WTC11 (cell line): ENCODE measurements at regions of chr16 and their contacts with region 1.

Region 1: GRCh38 chr16:1331712-1332617 is 1.5 kb upstream of the BAIAP3 start:
- DNase-seq: peak; percentile 93
- ATAC-seq: peak; percentile 57
- H3K4me3 Mint-ChIP-seq: peak overlapping the region; percentile 76
- H3K27ac Mint-ChIP-seq: peak overlapping the region; percentile 72; the same call in 1 of the 2 replicates
- H3K4me1 Mint-ChIP-seq: peaks cover 14% of the 10 kb centered on the region
- H3K27me3 Mint-ChIP-seq: peaks cover 35% of the 10 kb centered on the region
- CTCF ChIP-seq: no peak

Region 2: DNA sequence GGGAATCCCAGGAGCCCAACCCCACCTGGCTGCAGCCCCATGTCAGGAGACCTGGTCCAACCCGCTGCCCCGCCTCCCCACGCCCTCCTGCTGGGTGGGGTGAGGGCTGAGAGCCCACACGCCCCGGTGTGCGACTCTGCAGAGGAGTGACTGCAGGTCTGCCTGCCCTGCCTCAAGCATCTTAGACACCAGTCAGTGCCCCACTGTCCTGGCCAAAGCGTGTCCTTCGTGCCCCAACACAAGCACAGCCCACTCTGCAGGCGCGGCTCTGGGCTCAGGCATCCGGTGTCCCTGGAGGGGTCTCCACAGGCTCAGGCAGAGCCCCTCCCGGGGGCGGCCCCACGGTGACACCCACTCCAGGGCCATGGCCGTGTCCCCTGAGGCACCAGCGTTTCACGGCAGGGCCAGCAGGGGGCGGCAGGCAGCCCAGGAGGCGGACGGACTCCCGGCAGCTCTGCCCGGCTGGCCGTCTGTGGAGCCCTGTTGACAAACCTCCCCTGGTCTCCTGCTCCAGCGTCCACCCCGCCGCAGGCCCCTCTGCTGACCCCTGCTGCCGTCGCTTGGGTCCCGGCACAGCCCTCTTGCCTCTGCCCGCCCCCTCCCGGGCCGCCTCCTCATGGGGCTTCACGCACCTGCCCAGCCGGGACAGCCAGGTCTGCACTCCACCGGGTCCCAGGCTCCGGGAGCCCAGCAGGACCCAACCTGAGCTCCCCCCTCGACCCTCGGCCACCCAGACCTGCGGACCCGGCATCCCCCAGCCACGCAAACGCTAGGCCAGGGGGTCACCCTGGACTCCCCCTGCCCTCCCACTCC is 31.1 kb before region 1 on chr16:
- CTCF ChIA-PET with region 1: interaction called, 15 read pairs
- POLR2A ChIA-PET with region 1: interaction called, 6 read pairs
- DNase-seq: peak; percentile 83
- ATAC-seq: peak; percentile 70
- H3K4me3 Mint-ChIP-seq: no peak overlapping the region
- H3K27ac Mint-ChIP-seq: no peak overlapping the region
- H3K4me1 Mint-ChIP-seq: peaks cover 20% of the 10 kb centered on the region
- H3K27me3 Mint-ChIP-seq: peaks cover 11% of the 10 kb centered on the region
- CTCF ChIP-seq: peak; percentile 89

Region 3: DNA sequence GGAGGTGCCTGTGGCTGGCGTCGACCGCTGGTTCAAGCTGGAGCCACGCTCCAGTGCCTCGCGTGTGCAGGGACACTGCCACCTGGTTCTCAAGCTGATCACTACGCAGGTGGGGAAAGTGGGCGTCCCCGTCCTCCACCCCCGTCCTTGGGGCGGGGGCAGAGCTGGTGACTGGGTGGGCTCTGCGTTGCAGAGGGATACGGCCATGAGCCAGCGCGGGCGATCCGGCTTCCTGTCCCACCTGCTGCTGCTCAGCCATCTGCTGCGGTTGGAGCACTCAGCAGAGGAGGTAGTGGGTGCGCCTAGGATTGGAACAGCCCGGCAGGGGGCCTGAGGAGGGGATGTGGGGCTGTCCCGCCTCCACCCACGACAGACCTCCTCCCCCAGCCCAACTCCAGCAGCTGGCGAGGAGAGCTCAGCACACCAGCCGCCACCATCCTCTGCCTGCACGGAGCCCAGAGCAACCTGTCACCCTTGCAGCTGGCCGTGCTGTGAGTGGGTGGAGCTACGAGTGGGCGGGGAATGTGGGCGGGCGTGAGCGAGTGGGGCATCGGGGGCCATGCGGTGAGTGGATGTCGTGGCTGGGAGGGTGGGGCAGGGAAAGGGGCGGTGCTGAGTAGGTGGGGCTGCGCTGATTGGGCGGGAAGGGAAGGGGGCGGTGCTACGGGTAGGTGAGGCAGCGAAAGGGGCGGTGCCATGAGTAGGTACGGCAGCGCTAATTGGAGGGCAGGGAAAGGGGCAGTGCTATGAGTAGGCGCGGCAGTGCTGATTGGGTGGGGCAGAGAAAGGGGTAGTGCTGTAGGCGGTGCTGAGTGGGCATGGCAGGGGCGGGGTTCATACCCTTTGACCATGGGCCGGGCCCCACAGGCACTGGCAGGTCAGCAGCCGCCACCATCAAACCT is 10.8 kb after region 1 on chr16:
- CTCF ChIA-PET with region 1: interaction called, 16 read pairs
- POLR2A ChIA-PET with region 1: interaction called, 6 read pairs
- DNase-seq: peak; percentile 98
- ATAC-seq: peak; percentile 98
- H3K4me3 Mint-ChIP-seq: peak overlapping the region; percentile 71
- H3K27ac Mint-ChIP-seq: peak overlapping the region; percentile 36; the same call in 1 of the 2 replicates
- H3K4me1 Mint-ChIP-seq: peaks cover 4% of the 10 kb centered on the region
- H3K27me3 Mint-ChIP-seq: no peaks in the 10 kb centered on the region; the same call in 1 of the 2 replicates
- CTCF ChIP-seq: no peak

Region 4: GRCh38 chr16:1363501-1364041 is 31.6 kb after region 1 on chr16:
- CTCF ChIA-PET with region 1: interaction called, 19 read pairs
- POLR2A ChIA-PET with region 1: no interaction called
- DNase-seq: peak; percentile 79
- ATAC-seq: peak; percentile 94
- H3K4me3 Mint-ChIP-seq: no peak overlapping the region
- H3K27ac Mint-ChIP-seq: peak overlapping the region; percentile 92; the same call in 1 of the 2 replicates
- H3K4me1 Mint-ChIP-seq: no peaks in the 10 kb centered on the region
- H3K27me3 Mint-ChIP-seq: no peaks in the 10 kb centered on the region
- CTCF ChIP-seq: peak; percentile 77

Region 5: DNA sequence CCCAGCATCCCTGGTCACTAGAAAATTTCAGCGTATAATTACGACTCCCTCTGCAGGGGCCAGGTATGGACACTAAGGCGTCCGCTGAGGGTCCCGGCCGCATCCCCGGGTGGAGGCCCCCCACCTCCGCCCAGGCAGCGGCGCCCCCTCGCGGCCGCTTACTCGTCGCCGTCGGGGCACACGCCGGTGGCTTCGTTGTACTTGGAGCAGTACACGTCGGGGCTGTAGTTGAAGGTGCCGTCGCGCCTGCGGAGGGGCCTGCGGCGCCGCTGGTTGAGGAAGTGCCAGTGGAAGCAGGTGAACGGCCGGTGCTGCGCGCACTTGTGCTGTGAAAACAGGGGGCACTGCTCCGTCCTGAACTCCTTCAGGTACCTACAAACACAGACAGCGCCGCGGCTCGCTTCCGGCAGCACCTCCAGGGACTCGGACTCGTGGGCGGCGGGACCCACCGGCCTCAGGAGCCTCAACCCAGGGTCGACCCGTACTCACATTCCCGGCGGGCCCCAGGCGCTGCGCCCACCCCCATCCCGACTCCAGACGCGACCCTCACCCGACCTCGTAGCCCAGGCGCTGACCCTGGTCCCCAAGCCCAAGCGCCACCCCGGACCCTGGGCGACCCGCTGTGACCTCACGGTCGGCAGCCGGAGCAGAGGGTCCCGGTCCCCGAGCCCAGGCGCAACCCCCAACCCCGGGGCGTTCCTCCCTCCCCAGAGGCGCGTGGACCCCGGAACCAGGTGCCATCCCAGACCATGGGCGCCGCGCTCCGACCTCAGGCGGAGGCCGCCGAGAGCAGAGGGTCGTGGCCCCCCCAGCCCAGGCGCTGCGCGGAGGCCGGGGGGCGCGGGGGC is 81.9 kb after region 1 on chr16:
- CTCF ChIA-PET with region 1: no interaction called
- POLR2A ChIA-PET with region 1: interaction called, 11 read pairs
- DNase-seq: peak; percentile 85
- ATAC-seq: peak; percentile 68
- H3K4me3 Mint-ChIP-seq: peak overlapping the region; percentile 79
- H3K27ac Mint-ChIP-seq: no peak overlapping the region
- H3K4me1 Mint-ChIP-seq: 0 out of 2 replicates have a peak, but pooled peaks cover 4% of the 10 kb centered on the region
- H3K27me3 Mint-ChIP-seq: no peaks in the 10 kb centered on the region; the same call in 1 of the 2 replicates
- CTCF ChIP-seq: peak; percentile 58